IMR-90 (cell line): ENCODE measurements at regions of chr15 and their contacts with region 1.

Region 1: GRCh38 chr15:29090617-29091466 is 178.8 kb downstream of the NSMCE3 start:
- DNase-seq: peak; percentile 11
- ATAC-seq: peak; percentile 58
- H3K4me3 ChIP-seq: no peak overlapping the region
- H3K27ac ChIP-seq: no peak overlapping the region
- H3K4me1 ChIP-seq: no peaks in the 10 kb centered on the region
- H3K27me3 ChIP-seq: no peaks in the 10 kb centered on the region
- CTCF ChIP-seq: peak; percentile 64
- POLR2A ChIP-seq: no peak
- RAD21 ChIP-seq: peak; percentile 61

Region 2: DNA sequence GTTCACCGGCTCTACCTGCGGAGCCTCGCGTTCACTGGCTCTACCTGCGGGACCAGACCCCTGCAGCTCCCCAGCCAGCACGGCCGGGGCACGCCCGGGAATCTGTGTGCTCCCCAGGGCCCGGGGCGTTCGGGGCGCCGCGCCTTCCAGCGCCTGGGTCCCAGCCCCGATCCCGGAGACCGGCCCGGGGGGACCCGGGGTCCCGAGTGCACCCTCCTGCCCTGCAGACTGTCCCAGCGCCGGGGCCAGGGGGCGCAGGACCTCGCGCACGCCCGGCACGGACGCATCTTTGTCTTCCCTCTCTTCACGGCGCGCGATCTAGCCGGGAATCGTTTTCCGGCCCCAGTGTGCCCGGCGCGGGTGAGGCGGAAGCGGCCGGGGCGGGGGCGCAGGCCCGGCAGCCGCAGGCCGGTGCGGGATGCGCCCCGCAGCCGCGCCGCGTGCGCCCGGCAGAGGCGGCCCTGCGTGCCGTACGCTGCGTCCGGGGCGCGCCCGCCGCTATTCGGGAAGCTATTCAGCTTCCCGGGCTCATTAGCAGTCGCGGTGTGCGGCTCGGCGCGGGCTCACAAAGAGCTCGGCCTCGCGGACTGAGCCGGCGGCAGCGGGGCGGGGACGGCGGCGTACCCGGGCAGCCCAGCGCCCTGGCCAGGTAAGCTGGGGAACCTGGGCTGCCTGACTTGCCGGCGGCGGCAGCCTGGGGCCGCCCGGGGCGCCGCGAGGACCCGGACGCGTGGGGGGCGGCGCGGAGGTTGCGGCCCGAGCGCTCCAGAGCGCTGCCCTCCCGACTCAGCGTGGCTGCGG is 205.0 kb before region 1 on chr15 and contains the start of gene APBA2:
- CTCF ChIA-PET with region 1: interaction called, 4 read pairs
- POLR2A ChIA-PET with region 1: no interaction called
- dilution Hi-C with region 1: no loop called
- in situ Hi-C with region 1: no loop called
- intact Hi-C with region 1: loop called (anchors 2 kb)
- DNase-seq: peak; percentile 41
- ATAC-seq: peak; percentile 63
- H3K4me3 ChIP-seq: peak within 1 kb of the TSS; percentile 86
- H3K27ac ChIP-seq: peak within 1 kb of the TSS; percentile 59; the same call in 1 of the 2 replicates
- H3K4me1 ChIP-seq: peaks cover 8% of the 10 kb centered on the region; the same call in 1 of the 2 replicates
- H3K27me3 ChIP-seq: no peaks in the 10 kb centered on the region
- CTCF ChIP-seq: 0 out of 2 replicates have a peak, but pooled peaks have one; percentile 15
- POLR2A ChIP-seq: no peak
- RAD21 ChIP-seq: no peak
- total RNA-seq, gene APBA2: 27.8 and 33.0 TPM in 2 replicates

Region 3: DNA sequence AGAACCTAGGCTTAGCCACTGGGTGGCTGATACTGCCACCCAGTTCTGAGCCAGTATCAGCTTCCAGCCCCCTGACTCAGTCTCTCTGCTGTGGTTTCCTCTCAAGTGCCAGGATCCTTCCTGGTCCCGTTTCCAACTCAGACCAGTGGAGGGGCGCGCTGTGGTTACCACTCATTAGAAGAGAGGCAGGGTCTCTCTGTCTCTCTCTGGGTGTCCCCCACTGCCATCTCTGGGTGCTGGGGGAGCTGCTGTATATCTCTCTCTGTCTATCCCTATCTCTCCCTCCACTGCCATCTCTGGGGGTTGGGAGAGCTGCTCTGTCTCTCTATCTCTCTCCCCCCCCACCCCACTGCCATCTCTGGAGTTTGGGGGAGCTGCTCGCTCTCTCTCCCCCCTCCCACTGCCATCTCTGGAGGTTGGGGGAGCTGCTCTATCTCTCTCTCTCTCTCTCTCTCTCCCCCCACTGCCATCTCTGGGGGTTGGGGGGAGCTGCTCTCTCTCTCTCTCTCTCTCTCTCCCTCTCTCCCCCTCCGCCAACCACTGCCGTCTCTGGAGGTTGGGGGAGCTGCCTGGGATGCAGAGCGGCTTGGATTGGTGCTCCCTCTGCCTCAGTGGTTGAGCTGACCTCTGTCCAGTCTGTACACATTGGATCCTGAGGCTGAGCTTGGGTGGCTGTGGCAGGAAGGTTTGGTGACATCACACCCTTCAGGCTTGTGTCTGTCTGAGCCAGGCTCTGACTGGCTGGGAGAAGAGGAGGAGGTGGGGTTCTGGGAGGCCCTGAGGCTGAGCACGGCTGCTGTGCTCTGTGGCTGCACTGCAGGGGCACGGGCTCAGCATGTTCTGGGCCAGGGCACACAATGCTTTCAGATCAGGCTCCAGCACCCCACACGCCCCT is 106.2 kb before region 1 on chr15:
- CTCF ChIA-PET with region 1: no interaction called
- POLR2A ChIA-PET with region 1: no interaction called
- dilution Hi-C with region 1: no loop called
- in situ Hi-C with region 1: no loop called
- intact Hi-C with region 1: loop called (anchors 10 kb)
- DNase-seq: peak; percentile 82
- ATAC-seq: peak; percentile 99
- H3K4me3 ChIP-seq: no peak overlapping the region
- H3K27ac ChIP-seq: peak overlapping the region; percentile 72
- H3K4me1 ChIP-seq: peaks cover 11% of the 10 kb centered on the region
- H3K27me3 ChIP-seq: no peaks in the 10 kb centered on the region
- CTCF ChIP-seq: no peak
- POLR2A ChIP-seq: no peak
- RAD21 ChIP-seq: no peak

Region 4: GRCh38 chr15:29018120-29018805 is 72.6 kb before region 1 on chr15:
- CTCF ChIA-PET with region 1: no interaction called
- POLR2A ChIA-PET with region 1: no interaction called
- dilution Hi-C with region 1: no loop called
- in situ Hi-C with region 1: no loop called
- intact Hi-C with region 1: loop called (anchors 10 kb)
- DNase-seq: no peak
- ATAC-seq: no peak
- H3K4me3 ChIP-seq: no peak overlapping the region
- H3K27ac ChIP-seq: no peak overlapping the region
- H3K4me1 ChIP-seq: peaks cover 3% of the 10 kb centered on the region; the same call in 1 of the 2 replicates
- H3K27me3 ChIP-seq: no peaks in the 10 kb centered on the region
- CTCF ChIP-seq: no peak
- POLR2A ChIP-seq: no peak
- RAD21 ChIP-seq: no peak

Region 5: GRCh38 chr15:29322415-29322814 is 231.6 kb after region 1 on chr15:
- CTCF ChIA-PET with region 1: no interaction called
- POLR2A ChIA-PET with region 1: no interaction called
- dilution Hi-C with region 1: no loop called
- in situ Hi-C with region 1: no loop called
- intact Hi-C with region 1: no loop called
- DNase-seq: peak; percentile 35
- ATAC-seq: 0 out of 2 replicates have a peak, but pooled peaks have one; percentile 32
- H3K4me3 ChIP-seq: no peak overlapping the region
- H3K27ac ChIP-seq: no peak overlapping the region
- H3K4me1 ChIP-seq: no peaks in the 10 kb centered on the region
- H3K27me3 ChIP-seq: no peaks in the 10 kb centered on the region; the same call in 1 of the 2 replicates
- CTCF ChIP-seq: no peak
- POLR2A ChIP-seq: no peak
- RAD21 ChIP-seq: no peak